Naive thymus-derived CD4-positive, alpha-beta T cell (primary cell): ENCODE measurements at regions of chr6 and their contacts with region 1.

Region 1: DNA sequence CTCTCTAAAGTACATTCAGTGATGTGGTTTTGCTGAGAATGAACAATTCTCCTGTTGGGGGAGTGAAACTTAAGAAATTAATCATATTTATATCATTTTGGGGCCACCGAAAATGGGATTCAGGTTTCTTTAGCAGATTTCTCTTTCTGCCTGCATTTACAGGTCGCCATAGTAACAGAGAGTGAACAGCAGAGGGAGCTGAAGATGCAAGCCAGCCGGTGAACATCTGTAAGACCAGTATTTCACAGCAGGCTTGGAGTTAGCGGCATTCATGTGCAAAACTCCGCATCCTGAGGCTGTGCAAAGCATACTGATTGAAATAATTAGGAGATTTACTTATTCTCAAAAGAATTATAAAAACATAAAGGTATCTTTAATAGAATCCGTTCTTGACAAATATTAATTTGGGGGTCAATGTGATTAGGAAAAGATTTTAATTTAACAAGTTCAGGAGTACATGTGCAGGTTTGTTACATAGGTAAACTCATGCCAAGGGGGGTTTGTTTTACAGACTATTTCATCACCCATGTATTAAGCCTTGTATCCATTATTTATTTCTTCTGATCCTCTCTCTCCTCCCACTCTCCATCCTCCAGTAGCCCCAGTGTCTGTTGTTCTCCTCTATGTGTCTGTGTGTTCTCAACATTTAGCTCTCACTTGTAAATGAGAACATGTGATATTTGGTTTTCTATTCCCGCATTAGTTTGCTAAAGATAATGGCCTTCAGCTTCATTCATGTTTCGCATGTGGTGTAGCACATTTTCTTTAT is 17.8 kb upstream of the HSF2 start:
- DNase-seq: peak in 8 of 9 donors; percentile 32 to 81 (median 70)
- ATAC-seq: peak; percentile 98
- H3K4me3 ChIP-seq: no peak overlapping the region
- H3K4me3 Mint-ChIP-seq: peak overlapping the region in 1 of 10 donors; percentile 7
- H3K27ac ChIP-seq: no peak overlapping the region
- H3K27ac Mint-ChIP-seq: peak overlapping the region in 2 of 9 donors; percentile 45 to 60
- H3K4me1 ChIP-seq: no peaks in the 10 kb centered on the region
- H3K4me1 Mint-ChIP-seq: peaks cover 6 to 9% (median 7%) of the 10 kb centered on the region in 7 donors
- H3K27me3 ChIP-seq: no peaks in the 10 kb centered on the region
- H3K27me3 Mint-ChIP-seq: peaks cover 0 to 31% (median 9%) of the 10 kb centered on the region in 5 donors

Region 2: GRCh38 chr6:122408702-122409458 is 27.2 kb after region 1 on chr6:
- CTCF ChIA-PET with region 1: no interaction called
- POLR2A ChIA-PET with region 1: no interaction called
- intact Hi-C with region 1: loop called in 1 of 2 experiments (anchors 1 kb)
- DNase-seq: peak in 7 of 9 donors; percentile 59 to 78 (median 69)
- ATAC-seq: peak; percentile 89
- H3K4me3 ChIP-seq: peak overlapping the region; percentile 36
- H3K4me3 Mint-ChIP-seq: peak overlapping the region; percentile 65 to 91 (median 82)
- H3K27ac ChIP-seq: peak overlapping the region; percentile 79
- H3K27ac Mint-ChIP-seq: peak overlapping the region; percentile 70 to 98 (median 93)
- H3K4me1 ChIP-seq: peaks cover 6 to 51% of the 10 kb centered on the region in 2 donors
- H3K4me1 Mint-ChIP-seq: peaks cover 40 to 98% (median 87%) of the 10 kb centered on the region in 7 donors
- H3K27me3 ChIP-seq: no peaks in the 10 kb centered on the region
- H3K27me3 Mint-ChIP-seq: no peaks in the 10 kb centered on the region

Region 3: GRCh38 chr6:122422614-122423267 is 41.1 kb after region 1 on chr6:
- CTCF ChIA-PET with region 1: interaction called, 3 read pairs
- POLR2A ChIA-PET with region 1: no interaction called
- intact Hi-C with region 1: loop called in 1 of 2 experiments (anchors 2 kb)
- DNase-seq: no peak
- ATAC-seq: no peak
- H3K4me3 ChIP-seq: no peak overlapping the region
- H3K4me3 Mint-ChIP-seq: no peak overlapping the region
- H3K27ac ChIP-seq: no peak overlapping the region
- H3K27ac Mint-ChIP-seq: no peak overlapping the region
- H3K4me1 ChIP-seq: no peaks in the 10 kb centered on the region
- H3K4me1 Mint-ChIP-seq: peaks cover 1 to 19% (median 12%) of the 10 kb centered on the region in 7 donors
- H3K27me3 ChIP-seq: no peaks in the 10 kb centered on the region
- H3K27me3 Mint-ChIP-seq: no peaks in the 10 kb centered on the region

Region 4: DNA sequence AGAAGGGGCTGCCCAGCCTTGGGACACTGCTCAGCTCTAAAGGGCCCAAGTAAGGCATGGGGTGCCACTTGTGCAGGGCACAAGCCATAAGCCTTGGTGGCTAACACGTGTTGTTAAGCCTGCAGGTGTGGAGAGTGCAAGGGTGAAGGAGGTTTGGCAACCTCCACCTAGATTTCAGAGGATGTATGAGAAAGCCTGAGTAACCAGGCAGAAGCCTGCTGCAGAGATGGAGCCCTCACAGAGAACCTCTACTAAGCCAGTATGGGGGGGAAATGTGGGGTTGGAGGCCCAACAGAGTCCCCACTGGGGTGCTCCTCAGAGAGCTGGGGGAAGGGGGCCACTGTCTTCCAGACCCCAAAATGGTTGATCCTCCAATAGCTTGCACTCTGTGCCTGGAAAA is 57.3 kb after region 1 on chr6:
- CTCF ChIA-PET with region 1: no interaction called
- POLR2A ChIA-PET with region 1: interaction called, 4 read pairs
- intact Hi-C with region 1: loop called in 1 of 2 experiments (anchors 2 kb)
- DNase-seq: no peak
- ATAC-seq: peak; percentile 22
- H3K4me3 ChIP-seq: no peak overlapping the region
- H3K4me3 Mint-ChIP-seq: no peak overlapping the region
- H3K27ac ChIP-seq: no peak overlapping the region
- H3K27ac Mint-ChIP-seq: peak overlapping the region in 4 of 9 donors; percentile 24 to 84 (median 29)
- H3K4me1 ChIP-seq: no peaks in the 10 kb centered on the region
- H3K4me1 Mint-ChIP-seq: peaks cover 0 to 8% (median 3%) of the 10 kb centered on the region in 7 donors
- H3K27me3 ChIP-seq: no peaks in the 10 kb centered on the region
- H3K27me3 Mint-ChIP-seq: no peaks in the 10 kb centered on the region

Region 5: GRCh38 chr6:122484760-122485159 is 103.1 kb after region 1 on chr6:
- CTCF ChIA-PET with region 1: interaction called, 3 read pairs
- POLR2A ChIA-PET with region 1: no interaction called
- intact Hi-C with region 1: loop called in 1 of 2 experiments (anchors 2 kb)
- DNase-seq: no peak
- ATAC-seq: no peak
- H3K4me3 ChIP-seq: no peak overlapping the region
- H3K4me3 Mint-ChIP-seq: no peak overlapping the region
- H3K27ac ChIP-seq: no peak overlapping the region
- H3K27ac Mint-ChIP-seq: no peak overlapping the region
- H3K4me1 ChIP-seq: no peaks in the 10 kb centered on the region
- H3K4me1 Mint-ChIP-seq: no peaks in the 10 kb centered on the region
- H3K27me3 ChIP-seq: no peaks in the 10 kb centered on the region
- H3K27me3 Mint-ChIP-seq: no peaks in the 10 kb centered on the region

Region 6: GRCh38 chr6:122491919-122492555 is 110.4 kb after region 1 on chr6:
- CTCF ChIA-PET with region 1: interaction called, 3 read pairs
- POLR2A ChIA-PET with region 1: no interaction called
- intact Hi-C with region 1: loop called in 1 of 2 experiments (anchors 1 kb)
- DNase-seq: peak; percentile 33 to 72 (median 64)
- ATAC-seq: peak; percentile 98
- H3K4me3 ChIP-seq: no peak overlapping the region
- H3K4me3 Mint-ChIP-seq: peak overlapping the region in 4 of 10 donors; percentile 3 to 55 (median 8)
- H3K27ac ChIP-seq: no peak overlapping the region
- H3K27ac Mint-ChIP-seq: no peak overlapping the region
- H3K4me1 ChIP-seq: no peaks in the 10 kb centered on the region
- H3K4me1 Mint-ChIP-seq: peaks cover 0 to 17% (median 7%) of the 10 kb centered on the region in 7 donors
- H3K27me3 ChIP-seq: peaks cover 0 to 3% of the 10 kb centered on the region in 2 donors
- H3K27me3 Mint-ChIP-seq: peaks cover 0 to 3% (median 2%) of the 10 kb centered on the region in 5 donors

Region 7: DNA sequence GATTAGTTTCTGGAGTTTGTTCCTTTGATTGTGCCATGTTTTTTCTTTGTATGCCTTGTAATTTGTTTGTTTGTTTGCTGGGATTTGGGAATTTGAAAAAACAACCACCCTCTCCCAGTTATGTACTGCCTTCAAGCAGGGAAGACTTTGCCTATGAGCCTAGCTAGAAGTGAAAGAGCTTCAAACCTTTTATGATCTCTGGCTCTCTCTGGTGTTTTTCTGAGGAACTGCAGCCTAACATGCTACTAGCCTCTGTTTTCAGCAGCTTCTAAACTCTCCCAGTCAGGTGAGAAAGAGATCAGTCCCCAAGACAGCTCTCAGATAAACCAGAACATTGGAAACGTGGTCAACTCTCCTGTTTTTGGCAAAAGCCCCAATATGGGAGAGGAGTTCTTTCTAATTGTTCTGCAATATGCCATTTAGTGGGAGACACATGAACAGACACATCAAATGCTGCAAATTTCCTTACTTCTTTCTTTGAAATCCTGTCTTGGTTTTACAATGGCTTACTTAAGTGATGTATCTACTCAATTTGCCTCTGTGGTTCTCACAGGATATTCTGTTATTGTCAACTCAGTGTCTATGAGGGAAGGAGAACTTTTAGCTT is 148.9 kb after region 1 on chr6:
- CTCF ChIA-PET with region 1: interaction called, 86 read pairs
- POLR2A ChIA-PET with region 1: interaction called, 3 read pairs
- intact Hi-C with region 1: loop called (anchors 1 kb)
- DNase-seq: peak in 8 of 9 donors; percentile 36 to 73 (median 64)
- ATAC-seq: peak; percentile 86
- H3K4me3 ChIP-seq: no peak overlapping the region
- H3K4me3 Mint-ChIP-seq: no peak overlapping the region
- H3K27ac ChIP-seq: no peak overlapping the region
- H3K27ac Mint-ChIP-seq: no peak overlapping the region
- H3K4me1 ChIP-seq: no peaks in the 10 kb centered on the region
- H3K4me1 Mint-ChIP-seq: peaks cover 0 to 8% (median 0%) of the 10 kb centered on the region in 7 donors
- H3K27me3 ChIP-seq: no peaks in the 10 kb centered on the region
- H3K27me3 Mint-ChIP-seq: peaks cover 34 to 48% (median 37%) of the 10 kb centered on the region in 5 donors

Region 8: DNA sequence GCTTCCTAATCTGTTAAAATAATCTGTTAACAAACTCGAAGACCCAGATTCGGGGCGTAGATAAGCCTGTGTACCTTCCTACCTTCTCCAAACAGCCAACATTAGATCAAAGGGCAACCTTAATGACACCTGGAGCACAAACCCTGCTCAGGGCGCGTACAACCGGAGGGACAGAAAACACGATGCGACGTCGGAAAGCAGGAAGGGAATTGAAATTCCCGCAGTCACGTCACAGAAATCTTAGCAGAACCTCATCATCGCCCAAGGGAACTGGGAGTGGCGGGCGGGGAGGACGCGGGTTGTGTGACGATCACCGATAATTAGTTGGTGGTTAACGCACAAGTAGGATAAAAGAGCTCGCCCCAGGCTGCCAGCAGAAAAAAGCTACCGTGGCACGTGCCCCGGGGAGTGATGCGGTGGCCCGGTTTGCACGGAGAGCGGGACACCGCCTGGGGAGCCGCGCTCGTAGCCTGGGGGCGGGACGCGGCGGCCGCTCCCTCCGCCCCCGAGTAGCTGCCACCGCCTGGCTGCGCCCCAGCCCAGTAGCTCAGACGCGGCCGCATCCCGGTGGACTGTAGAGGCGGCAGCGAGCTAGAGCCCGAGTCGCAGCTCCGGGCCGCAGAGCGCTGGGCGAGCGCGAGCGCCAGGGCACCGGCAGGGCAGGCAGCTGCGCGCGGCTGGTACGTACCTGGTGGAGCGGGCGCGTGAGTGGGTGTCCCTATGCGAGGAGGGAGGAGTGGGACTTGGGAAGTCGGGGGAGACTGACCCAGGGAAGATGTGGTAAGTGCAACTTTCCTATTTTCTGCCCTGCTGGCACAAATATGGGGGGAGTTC is 228.4 kb after region 1 on chr6 and contains the start of gene PKIB:
- CTCF ChIA-PET with region 1: no interaction called
- POLR2A ChIA-PET with region 1: no interaction called
- intact Hi-C with region 1: no loop called
- DNase-seq: peak; percentile 2 to 59 (median 18)
- ATAC-seq: peak; percentile 85
- H3K4me3 ChIP-seq: peak within 1 kb of the TSS; percentile 78
- H3K4me3 Mint-ChIP-seq: peak within 1 kb of the TSS; percentile 88 to 95 (median 91)
- H3K27ac ChIP-seq: no peak within 1 kb of the TSS
- H3K27ac Mint-ChIP-seq: peak within 1 kb of the TSS in 6 of 9 donors; percentile 18 to 84 (median 56)
- H3K4me1 ChIP-seq: peaks cover 6 to 7% of the 10 kb centered on the region in 2 donors
- H3K4me1 Mint-ChIP-seq: peaks cover 5 to 21% (median 16%) of the 10 kb centered on the region in 7 donors
- H3K27me3 ChIP-seq: peaks cover 0 to 12% of the 10 kb centered on the region in 2 donors
- H3K27me3 Mint-ChIP-seq: peaks cover 14 to 52% (median 46%) of the 10 kb centered on the region in 5 donors
- total RNA-seq, gene PKIB: 0.86 to 1.5 (median 0.91) TPM in 4 of 5 experiments, not detected in the other